Endothelial cell of umbilical vein (primary cell): ENCODE measurements at regions of chr1 and their contacts with region 1.

Region 1: GRCh38 chr1:201970334-201971159 is 11.9 kb upstream of the RNPEP start:
- DNase-seq: peak; percentile 27
- H3K4me3 ChIP-seq: no peak overlapping the region
- H3K27ac ChIP-seq: no peak overlapping the region
- H3K4me1 ChIP-seq: no peaks in the 10 kb centered on the region
- H3K27me3 ChIP-seq: no peaks in the 10 kb centered on the region
- CTCF ChIP-seq: no peak
- POLR2A ChIP-seq: no peak

Region 2: DNA sequence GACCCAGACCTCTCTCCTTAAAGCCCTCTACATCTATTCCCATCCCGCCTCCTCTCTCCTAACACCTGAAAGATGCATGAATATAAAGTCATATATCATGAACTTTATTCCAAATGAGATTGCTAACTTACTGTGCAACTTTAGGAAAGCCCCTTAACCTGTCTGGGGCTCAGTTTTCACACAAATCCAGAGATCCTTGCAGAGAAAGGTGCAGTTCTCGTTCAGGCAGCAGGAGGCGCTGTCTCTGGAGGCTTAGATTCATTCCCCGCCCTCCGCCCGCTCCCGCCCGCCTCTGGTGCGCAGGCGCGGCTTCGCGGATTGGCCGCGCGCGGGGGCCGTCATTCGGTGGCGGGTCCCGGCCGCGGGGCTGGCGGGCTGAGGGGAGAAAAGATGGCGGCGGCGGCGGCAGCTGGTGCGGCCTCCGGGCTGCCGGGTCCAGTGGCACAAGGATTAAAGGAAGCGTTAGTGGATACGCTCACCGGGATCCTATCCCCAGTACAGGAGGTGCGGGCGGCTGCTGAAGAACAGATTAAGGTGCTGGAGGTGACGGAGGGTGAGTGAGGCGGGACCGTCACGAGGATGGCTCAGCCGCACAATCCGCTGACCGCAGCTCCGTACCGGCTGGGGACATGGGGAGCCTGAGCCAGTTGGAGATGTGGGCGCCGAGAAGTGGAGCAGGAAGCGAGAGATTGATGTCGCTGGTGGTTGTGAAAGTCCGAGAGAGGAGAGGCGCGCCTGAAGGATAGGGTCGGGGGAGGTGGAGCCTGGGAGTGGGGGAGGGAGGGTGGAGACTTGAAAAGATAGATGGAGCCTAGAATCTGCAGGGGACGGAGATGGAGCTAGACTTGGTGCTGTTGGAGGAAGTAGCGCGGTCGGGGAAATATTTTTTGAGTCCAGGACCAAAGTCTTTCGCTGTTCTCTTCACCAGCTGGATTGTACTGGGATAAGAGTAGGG is 141.4 kb before region 1 on chr1 and contains the start of gene IPO9:
- CTCF ChIA-PET with region 1: interaction called, 12 read pairs
- POLR2A ChIA-PET with region 1: no interaction called
- dilution Hi-C with region 1: no loop called
- intact Hi-C with region 1: loop called (anchors 2 kb)
- DNase-seq: peak; percentile 94
- H3K4me3 ChIP-seq: peak within 1 kb of the TSS; percentile 94 to 97 (median 95)
- H3K27ac ChIP-seq: peak within 1 kb of the TSS; percentile 89
- H3K4me1 ChIP-seq: peaks cover 14% of the 10 kb centered on the region
- H3K27me3 ChIP-seq: no peaks in the 10 kb centered on the region
- CTCF ChIP-seq: peak; percentile 93 to 96
- POLR2A ChIP-seq: peak; percentile 33
- total RNA-seq, gene IPO9: 104 and 114 TPM in 2 replicates

Region 3: DNA sequence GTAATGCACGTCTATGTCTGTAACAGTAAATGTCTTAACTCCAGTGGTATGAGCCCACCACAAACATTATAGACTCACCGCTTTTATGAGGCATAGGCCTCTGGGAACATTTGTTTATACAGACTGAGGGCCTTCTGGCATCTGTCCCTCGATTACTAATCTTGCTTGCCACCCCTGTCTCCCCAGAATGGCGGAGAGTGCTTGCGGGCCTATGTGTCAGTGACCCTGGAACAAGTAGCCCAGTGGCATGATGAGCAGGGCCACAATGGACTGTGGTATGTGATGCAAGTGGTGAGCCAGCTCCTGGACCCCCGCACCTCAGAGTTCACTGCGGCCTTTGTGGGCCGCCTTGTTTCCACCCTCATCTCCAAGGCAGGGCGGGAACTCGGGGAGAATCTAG is 100.2 kb before region 1 on chr1:
- CTCF ChIA-PET with region 1: interaction called, 13 read pairs
- POLR2A ChIA-PET with region 1: no interaction called
- dilution Hi-C with region 1: no loop called
- intact Hi-C with region 1: no loop called
- DNase-seq: no peak
- H3K4me3 ChIP-seq: no peak overlapping the region
- H3K27ac ChIP-seq: no peak overlapping the region
- H3K4me1 ChIP-seq: no peaks in the 10 kb centered on the region
- H3K27me3 ChIP-seq: no peaks in the 10 kb centered on the region
- CTCF ChIP-seq: no peak
- POLR2A ChIP-seq: no peak

Region 4: DNA sequence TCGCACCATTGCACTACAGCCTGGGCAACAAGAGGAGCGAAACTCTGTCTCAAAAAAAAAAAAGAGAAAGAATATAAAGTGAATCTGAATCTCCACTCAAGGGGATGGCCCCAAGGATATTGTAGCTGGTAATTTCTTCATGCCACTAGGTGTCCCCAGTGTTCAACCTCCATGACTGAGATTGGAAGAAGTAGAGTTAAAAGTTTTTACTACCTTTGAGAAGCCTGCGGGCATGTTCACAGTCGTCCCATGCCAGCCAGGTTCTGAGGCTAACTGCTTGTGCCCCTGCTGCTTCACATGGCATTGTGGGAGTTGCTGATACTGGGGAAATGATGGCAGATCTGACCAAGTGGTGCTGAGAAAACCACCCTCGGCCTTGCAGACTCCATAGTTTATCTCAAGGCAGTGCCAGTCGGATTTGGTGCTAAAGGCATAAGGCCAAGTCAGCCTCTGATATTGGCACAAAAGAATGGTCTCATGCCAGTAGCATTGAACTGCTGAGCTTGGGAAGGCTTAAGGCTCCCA is 92.6 kb before region 1 on chr1:
- CTCF ChIA-PET with region 1: interaction called, 99 read pairs
- POLR2A ChIA-PET with region 1: interaction called, 8 read pairs
- dilution Hi-C with region 1: no loop called
- intact Hi-C with region 1: no loop called
- DNase-seq: peak; percentile 64
- H3K4me3 ChIP-seq: no peak overlapping the region
- H3K27ac ChIP-seq: no peak overlapping the region
- H3K4me1 ChIP-seq: no peaks in the 10 kb centered on the region
- H3K27me3 ChIP-seq: no peaks in the 10 kb centered on the region
- CTCF ChIP-seq: peak; percentile 53 to 67
- POLR2A ChIP-seq: no peak

Region 5: GRCh38 chr1:201904579-201904978 is 66.0 kb before region 1 on chr1:
- CTCF ChIA-PET with region 1: interaction called, 577 read pairs
- POLR2A ChIA-PET with region 1: no interaction called
- dilution Hi-C with region 1: no loop called
- intact Hi-C with region 1: no loop called
- DNase-seq: peak; percentile 81
- H3K4me3 ChIP-seq: no peak overlapping the region
- H3K27ac ChIP-seq: peak overlapping the region; percentile 30
- H3K4me1 ChIP-seq: peaks cover 13% of the 10 kb centered on the region
- H3K27me3 ChIP-seq: no peaks in the 10 kb centered on the region
- CTCF ChIP-seq: no peak
- POLR2A ChIP-seq: no peak

Region 6: GRCh38 chr1:201938440-201939035 is 32.0 kb before region 1 on chr1:
- CTCF ChIA-PET with region 1: no interaction called
- POLR2A ChIA-PET with region 1: no interaction called
- dilution Hi-C with region 1: no loop called
- intact Hi-C with region 1: no loop called
- DNase-seq: no peak
- H3K4me3 ChIP-seq: no peak overlapping the region
- H3K27ac ChIP-seq: no peak overlapping the region
- H3K4me1 ChIP-seq: no peaks in the 10 kb centered on the region
- H3K27me3 ChIP-seq: no peaks in the 10 kb centered on the region
- CTCF ChIP-seq: no peak
- POLR2A ChIP-seq: no peak

Region 7: DNA sequence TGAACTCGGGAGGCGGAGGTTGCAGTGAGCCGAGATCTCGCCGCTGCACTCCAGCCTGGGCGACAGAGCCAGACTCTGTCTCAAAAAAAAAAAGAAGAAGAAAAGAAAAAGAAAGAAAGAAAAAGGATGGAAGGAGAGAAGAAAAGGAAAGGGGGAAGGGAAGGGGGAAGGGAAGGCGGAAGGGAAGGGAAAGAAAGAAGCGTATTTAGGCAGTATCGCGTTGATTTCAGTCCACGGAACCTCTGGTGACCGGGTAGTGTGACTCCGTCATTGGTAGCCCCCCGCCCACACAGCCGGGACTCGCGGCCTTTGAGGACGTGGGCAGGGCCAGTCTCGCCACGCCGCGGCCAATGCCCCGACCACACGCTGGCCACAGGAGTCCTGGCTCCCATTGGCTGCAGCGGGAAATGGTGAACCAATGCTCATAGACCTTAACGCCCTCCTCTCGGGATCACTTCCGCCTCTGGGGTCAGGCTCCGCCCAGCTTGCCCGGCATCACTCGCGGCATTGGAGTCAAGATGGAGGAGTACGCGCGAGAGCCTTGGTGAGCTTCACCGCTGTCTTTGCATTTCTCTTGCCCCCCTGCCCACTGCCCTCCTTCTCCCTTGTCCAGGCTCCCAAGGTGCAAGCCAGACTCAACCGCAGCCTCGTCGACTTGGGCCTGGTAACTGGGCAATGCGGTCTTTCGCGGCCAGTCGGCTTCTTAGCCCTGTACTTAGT is 15.4 kb before region 1 on chr1 and contains the start of gene TIMM17A:
- CTCF ChIA-PET with region 1: interaction called, 4 read pairs
- POLR2A ChIA-PET with region 1: no interaction called
- dilution Hi-C with region 1: no loop called
- intact Hi-C with region 1: loop called (anchors 2 kb)
- DNase-seq: peak; percentile 99
- H3K4me3 ChIP-seq: peak within 1 kb of the TSS; percentile 26 to 87 (median 68)
- H3K27ac ChIP-seq: peak within 1 kb of the TSS; percentile 71
- H3K4me1 ChIP-seq: peaks cover 10% of the 10 kb centered on the region
- H3K27me3 ChIP-seq: no peaks in the 10 kb centered on the region
- CTCF ChIP-seq: no peak
- POLR2A ChIP-seq: peak; percentile 97
- total RNA-seq, gene TIMM17A: 93.7 and 105 TPM in 2 replicates

Region 8: GRCh38 chr1:201982623-201983379 is 12.3 kb after region 1 on chr1 and contains the start of gene RNPEP:
- CTCF ChIA-PET with region 1: interaction called, 15 read pairs
- POLR2A ChIA-PET with region 1: no interaction called
- dilution Hi-C with region 1: no loop called
- intact Hi-C with region 1: no loop called
- DNase-seq: peak; percentile 57
- H3K4me3 ChIP-seq: peak within 1 kb of the TSS; percentile 48 to 98 (median 75)
- H3K27ac ChIP-seq: peak within 1 kb of the TSS; percentile 18
- H3K4me1 ChIP-seq: peaks cover 8% of the 10 kb centered on the region
- H3K27me3 ChIP-seq: no peaks in the 10 kb centered on the region
- CTCF ChIP-seq: no peak
- POLR2A ChIP-seq: peak; percentile 90
- total RNA-seq, gene RNPEP: 65.7 and 73.5 TPM in 2 replicates